Thyroid gland (tissue), 4 donors: ENCODE measurements at regions of chr15 and their contacts with region 1.

Region 1: DNA sequence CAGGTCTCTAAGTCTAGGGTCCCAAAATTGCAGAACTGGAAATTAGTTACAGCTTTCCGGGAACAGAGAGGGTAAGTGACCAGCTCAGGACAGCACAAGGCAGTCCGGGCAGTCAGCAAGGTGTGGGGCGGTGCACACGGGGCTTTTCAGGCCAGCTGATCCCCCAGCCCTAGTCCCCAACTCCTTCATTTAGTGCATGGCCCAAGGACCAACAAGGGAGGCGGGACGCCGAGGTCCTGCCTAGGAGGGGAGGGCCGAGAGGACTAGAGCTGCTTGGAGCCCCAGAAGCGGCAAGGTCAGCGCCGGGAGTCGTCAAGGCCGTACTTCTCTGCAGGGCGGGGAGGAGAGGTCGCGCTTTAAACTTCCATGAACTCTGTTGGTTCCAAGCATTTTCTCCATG is 2.0 kb upstream of the PDE8A start:
- DNase-seq: peak in 1 of 2 donors; percentile 18
- H3K4me3 ChIP-seq: peak overlapping the region in 1 of 3 donors; percentile 67
- H3K27ac ChIP-seq: no peak overlapping the region
- H3K4me1 ChIP-seq: peaks cover 17 to 35% of the 10 kb centered on the region in 2 donors
- H3K27me3 ChIP-seq: no peaks in the 10 kb centered on the region
- CTCF ChIP-seq: no peak
- POLR2A ChIP-seq: no peak

Region 2: DNA sequence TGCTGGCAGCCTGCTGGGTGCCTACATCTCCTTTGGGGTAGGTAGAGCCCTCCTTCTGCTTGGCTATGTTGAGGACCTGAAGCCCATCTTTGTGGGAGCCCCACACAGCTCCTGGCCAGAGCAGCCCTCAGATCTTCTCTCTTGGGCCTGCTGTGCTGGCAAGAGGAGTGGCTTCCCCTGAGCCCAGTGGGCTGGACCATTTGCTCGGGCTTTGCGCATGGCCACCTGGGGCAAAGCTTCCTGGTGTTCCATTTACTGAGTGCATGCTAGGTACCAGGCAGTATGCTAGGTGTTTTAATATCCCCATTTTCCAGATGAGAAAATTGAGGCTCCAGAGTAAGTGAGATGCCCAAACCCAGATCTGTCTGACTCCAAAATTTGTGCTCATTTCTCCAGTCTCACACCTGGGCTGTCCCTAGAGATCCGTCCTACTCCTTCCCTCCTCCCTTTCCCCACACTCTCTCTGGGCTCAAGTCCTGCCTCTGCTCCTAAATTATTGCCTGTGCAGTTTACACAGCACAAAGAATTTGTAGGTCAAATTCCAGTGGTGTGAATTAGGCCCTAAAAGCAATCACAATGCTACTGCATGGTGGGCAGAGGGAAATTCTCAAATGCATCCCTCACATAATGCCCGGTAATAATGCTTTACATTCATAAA is 55.4 kb before region 1 on chr15:
- intact Hi-C with region 1: no loop called
- DNase-seq: no peak
- H3K4me3 ChIP-seq: no peak overlapping the region
- H3K27ac ChIP-seq: no peak overlapping the region
- H3K4me1 ChIP-seq: peaks cover 3 to 19% of the 10 kb centered on the region in 2 donors
- H3K27me3 ChIP-seq: no peaks in the 10 kb centered on the region
- CTCF ChIP-seq: no peak
- POLR2A ChIP-seq: no peak

Region 3: GRCh38 chr15:85044251-85044853 is 64.7 kb after region 1 on chr15:
- intact Hi-C with region 1: loop called (anchors 5 kb)
- DNase-seq: peak; percentile 30 to 43
- H3K4me3 ChIP-seq: no peak overlapping the region
- H3K27ac ChIP-seq: no peak overlapping the region
- H3K4me1 ChIP-seq: peaks cover 0 to 21% of the 10 kb centered on the region in 2 donors
- H3K27me3 ChIP-seq: no peaks in the 10 kb centered on the region
- CTCF ChIP-seq: peak in 5 of 6 experiments; percentile 29 to 53 (median 45)
- POLR2A ChIP-seq: no peak

Region 4: DNA sequence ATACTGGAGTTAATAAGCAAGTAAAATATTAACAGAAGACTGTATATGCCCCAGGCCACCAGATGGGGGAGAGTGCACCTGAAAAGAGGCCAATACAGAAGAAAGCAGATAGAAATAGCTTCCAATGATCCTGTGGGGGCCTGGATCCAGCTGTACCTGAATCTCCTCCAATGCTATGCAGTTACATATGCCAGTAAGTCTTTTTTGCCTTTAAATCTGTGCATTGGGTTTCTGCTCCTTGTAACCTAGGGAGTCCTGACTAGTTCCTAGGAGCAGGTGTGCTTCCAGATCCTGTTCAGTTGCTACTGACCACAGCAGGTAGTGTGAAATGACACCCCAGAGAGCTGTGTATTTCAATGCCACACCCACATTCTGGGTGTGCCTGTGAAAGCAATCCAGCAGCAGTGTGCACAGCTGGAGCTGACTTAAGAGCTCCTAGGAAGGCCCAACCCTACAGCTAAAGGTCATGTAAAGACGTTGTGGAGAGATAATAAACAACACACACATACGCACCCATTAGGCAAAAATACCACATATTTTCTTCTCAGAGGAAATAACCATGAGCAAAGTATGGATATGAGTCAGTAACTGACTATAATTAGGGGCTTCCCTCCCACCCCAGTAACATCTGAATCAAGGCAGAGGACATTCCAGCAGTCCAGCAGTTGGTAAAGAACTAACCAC is 338.5 kb after region 1 on chr15:
- intact Hi-C with region 1: no loop called
- DNase-seq: no peak
- H3K4me3 ChIP-seq: no peak overlapping the region
- H3K27ac ChIP-seq: no peak overlapping the region
- H3K4me1 ChIP-seq: peaks cover 15 to 39% of the 10 kb centered on the region in 2 donors
- H3K27me3 ChIP-seq: no peaks in the 10 kb centered on the region
- CTCF ChIP-seq: peak in 1 of 6 experiments; percentile 9
- POLR2A ChIP-seq: no peak